ENCODE measurements at regions of chrX and their contacts with region 1.

Region 1: DNA sequence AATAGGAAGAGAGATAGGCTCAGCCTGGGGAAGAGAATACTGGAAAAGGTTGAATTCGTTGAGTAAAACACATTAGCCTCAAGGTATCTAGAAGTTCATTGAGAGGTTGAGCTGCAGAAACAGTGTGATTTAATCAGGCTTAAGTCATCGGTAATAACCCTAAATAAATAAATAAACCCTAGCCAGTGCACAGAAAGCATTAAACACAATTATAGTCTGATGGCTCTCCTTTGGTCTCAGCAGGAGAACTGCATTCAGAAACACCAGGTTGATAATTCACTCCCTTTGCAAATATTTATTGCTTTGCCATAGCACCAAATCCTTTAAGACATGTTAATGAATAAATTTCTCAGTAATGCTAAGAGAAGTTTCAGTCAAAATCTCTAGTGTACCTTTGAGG is 9.6 kb downstream of the DCX start:
- DNase-seq: no peak
- H3K4me3 ChIP-seq: no peak overlapping the region
- H3K27ac ChIP-seq: no peak overlapping the region
- H3K27me3 ChIP-seq: peaks cover 0 to 85% (median 23%) of the 10 kb centered on the region in 45 donors
- CTCF ChIP-seq: no peak

Region 2: DNA sequence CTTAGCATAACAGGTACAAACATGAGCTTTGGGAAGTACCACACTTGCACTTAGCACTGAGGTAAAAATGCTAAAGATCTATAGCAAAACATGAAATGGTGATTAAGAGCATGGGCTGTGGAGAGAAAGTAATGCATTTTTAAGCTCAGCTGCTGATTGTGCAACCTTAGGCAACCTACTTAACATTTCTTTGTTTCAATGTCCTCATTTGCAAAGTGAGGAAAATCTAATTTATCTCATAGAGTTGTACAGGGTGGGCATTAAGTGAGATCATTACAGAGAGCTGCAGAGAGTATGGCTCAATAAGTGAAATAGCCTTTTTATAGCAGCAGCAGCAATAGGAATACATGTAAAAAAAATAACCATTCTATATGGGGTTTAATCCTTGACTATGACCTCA is 219.3 kb before region 1 on chrX:
- intact Hi-C with region 1: no loop called
- DNase-seq: no peak
- H3K4me3 ChIP-seq: no peak overlapping the region
- H3K27ac ChIP-seq: peak overlapping the region in 1 of 59 donors; percentile 24
- H3K27me3 ChIP-seq: peaks cover 0 to 73% (median 8%) of the 10 kb centered on the region in 45 donors
- CTCF ChIP-seq: no peak

Region 3: GRCh38 chrX:111231251-111231650 is 171.1 kb before region 1 on chrX:
- intact Hi-C with region 1: no loop called
- DNase-seq: no peak
- H3K4me3 ChIP-seq: no peak overlapping the region
- H3K27ac ChIP-seq: no peak overlapping the region
- H3K27me3 ChIP-seq: peaks cover 0 to 85% (median 34%) of the 10 kb centered on the region in 45 donors
- CTCF ChIP-seq: no peak

Region 4: DNA sequence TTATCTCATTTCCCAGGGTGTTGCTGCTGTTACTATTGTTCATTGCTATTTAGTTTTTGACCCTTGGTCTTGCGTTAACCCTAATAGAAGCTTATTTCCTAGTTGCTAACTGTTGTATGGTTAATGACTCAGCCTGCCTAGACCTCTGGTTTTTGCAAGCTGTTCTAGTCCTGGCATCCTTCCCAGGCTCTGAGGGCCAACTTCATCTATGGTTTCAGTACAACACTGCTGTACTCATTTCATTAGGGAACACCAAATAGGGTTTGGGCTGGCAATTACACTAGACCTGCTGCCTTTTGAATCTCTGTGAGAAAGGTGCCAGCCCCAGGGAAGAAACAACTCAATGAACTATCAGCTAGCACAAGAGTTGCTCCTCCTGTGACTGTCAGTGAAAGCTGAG is 49.9 kb before region 1 on chrX:
- intact Hi-C with region 1: loop called in 1 of 2 experiments (anchors 10 kb)
- DNase-seq: peak in 1 of 10 donors; percentile 12
- H3K4me3 ChIP-seq: no peak overlapping the region
- H3K27ac ChIP-seq: peak overlapping the region in 1 of 59 donors; percentile 14
- H3K27me3 ChIP-seq: peaks cover 0 to 73% (median 14%) of the 10 kb centered on the region in 45 donors
- CTCF ChIP-seq: no peak

Measured in dorsolateral prefrontal cortex (tissue), 120 donors.